Naive thymus-derived CD4-positive, alpha-beta T cell (primary cell): ENCODE measurements at regions of chr13 and their contacts with region 1.

Region 1: DNA sequence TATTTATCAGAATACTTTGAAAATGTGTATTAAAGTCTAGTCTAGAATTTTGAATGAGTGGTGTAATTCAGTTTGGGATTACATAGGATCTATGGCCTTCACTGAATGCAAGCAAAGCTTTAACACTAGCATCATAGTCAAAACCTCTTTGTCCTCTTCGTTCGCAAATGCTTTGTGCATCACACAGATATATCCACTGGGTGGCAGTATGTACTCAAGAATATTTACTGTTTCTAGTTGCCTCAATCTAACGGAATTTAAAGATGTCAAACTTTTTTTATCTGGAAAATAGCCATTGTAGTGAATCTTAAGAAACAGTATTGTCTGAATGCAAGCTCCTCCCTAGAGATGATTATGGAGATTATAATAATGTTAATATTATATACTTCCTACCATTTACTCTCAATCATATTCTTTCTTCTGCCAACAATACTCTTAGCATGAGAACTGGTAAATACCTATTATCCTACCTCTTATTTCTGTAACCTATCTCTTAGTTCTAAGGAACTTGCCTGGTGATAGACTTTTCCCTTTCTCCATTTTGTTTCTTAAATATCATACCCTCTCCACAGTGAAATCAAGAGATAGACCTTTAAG is 25.8 kb downstream of the LACC1 start:
- DNase-seq: peak in 7 of 9 donors; percentile 21 to 61 (median 48)
- ATAC-seq: peak; percentile 85
- H3K4me3 ChIP-seq: no peak overlapping the region
- H3K4me3 Mint-ChIP-seq: no peak overlapping the region
- H3K27ac ChIP-seq: no peak overlapping the region
- H3K27ac Mint-ChIP-seq: no peak overlapping the region
- H3K4me1 ChIP-seq: no peaks in the 10 kb centered on the region
- H3K4me1 Mint-ChIP-seq: peaks cover 0 to 6% (median 3%) of the 10 kb centered on the region in 7 donors
- H3K27me3 ChIP-seq: no peaks in the 10 kb centered on the region
- H3K27me3 Mint-ChIP-seq: peaks cover 13 to 35% (median 18%) of the 10 kb centered on the region in 5 donors

Region 2: GRCh38 chr13:42906258-42906657 is 999.3 kb before region 1 on chr13:
- CTCF ChIA-PET with region 1: no interaction called
- POLR2A ChIA-PET with region 1: no interaction called
- intact Hi-C with region 1: no loop called
- DNase-seq: no peak
- ATAC-seq: no peak
- H3K4me3 ChIP-seq: no peak overlapping the region
- H3K4me3 Mint-ChIP-seq: no peak overlapping the region
- H3K27ac ChIP-seq: no peak overlapping the region
- H3K27ac Mint-ChIP-seq: no peak overlapping the region
- H3K4me1 ChIP-seq: no peaks in the 10 kb centered on the region
- H3K4me1 Mint-ChIP-seq: peaks cover 0 to 7% (median 0%) of the 10 kb centered on the region in 7 donors
- H3K27me3 ChIP-seq: no peaks in the 10 kb centered on the region
- H3K27me3 Mint-ChIP-seq: no peaks in the 10 kb centered on the region

Region 3: GRCh38 chr13:43684963-43685725 is 220.4 kb before region 1 on chr13:
- CTCF ChIA-PET with region 1: no interaction called
- POLR2A ChIA-PET with region 1: no interaction called
- intact Hi-C with region 1: no loop called
- DNase-seq: no peak
- ATAC-seq: no peak
- H3K4me3 ChIP-seq: no peak overlapping the region
- H3K4me3 Mint-ChIP-seq: no peak overlapping the region
- H3K27ac ChIP-seq: no peak overlapping the region
- H3K27ac Mint-ChIP-seq: no peak overlapping the region
- H3K4me1 ChIP-seq: no peaks in the 10 kb centered on the region
- H3K4me1 Mint-ChIP-seq: no peaks in the 10 kb centered on the region
- H3K27me3 ChIP-seq: no peaks in the 10 kb centered on the region
- H3K27me3 Mint-ChIP-seq: peaks cover 0 to 14% (median 4%) of the 10 kb centered on the region in 5 donors

Region 4: DNA sequence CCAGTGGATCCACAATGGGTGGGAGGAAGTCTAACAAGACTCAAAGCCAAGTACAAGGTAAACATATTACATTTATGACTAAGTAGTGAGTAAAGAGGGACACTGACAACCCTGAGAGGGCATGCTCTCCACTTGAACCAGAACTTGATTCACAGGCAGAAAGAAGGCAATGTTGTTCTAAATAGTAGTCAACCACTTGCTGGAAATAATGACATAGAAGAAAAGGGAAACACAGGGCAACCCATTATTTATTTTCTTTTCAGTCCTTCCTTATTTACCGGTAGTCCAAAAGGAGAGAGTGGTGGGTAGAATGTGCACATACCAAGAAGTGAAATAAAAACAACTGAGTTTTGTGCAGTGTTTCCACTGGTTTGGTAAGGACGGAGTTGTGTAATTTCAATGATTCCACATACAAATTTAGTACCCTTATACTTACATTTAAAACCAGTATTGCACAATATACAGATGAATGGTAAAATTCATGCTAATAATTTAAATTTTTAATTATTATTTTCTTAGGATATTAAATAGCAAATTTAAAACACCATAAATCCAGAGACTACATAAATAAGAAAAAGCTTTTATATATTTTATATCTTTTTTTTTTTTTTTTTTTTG is 184.6 kb before region 1 on chr13:
- CTCF ChIA-PET with region 1: no interaction called
- POLR2A ChIA-PET with region 1: no interaction called
- intact Hi-C with region 1: no loop called
- DNase-seq: no peak
- ATAC-seq: no peak
- H3K4me3 ChIP-seq: no peak overlapping the region
- H3K4me3 Mint-ChIP-seq: no peak overlapping the region
- H3K27ac ChIP-seq: no peak overlapping the region
- H3K27ac Mint-ChIP-seq: no peak overlapping the region
- H3K4me1 ChIP-seq: no peaks in the 10 kb centered on the region
- H3K4me1 Mint-ChIP-seq: no peaks in the 10 kb centered on the region
- H3K27me3 ChIP-seq: no peaks in the 10 kb centered on the region
- H3K27me3 Mint-ChIP-seq: peaks cover 3 to 27% (median 16%) of the 10 kb centered on the region in 5 donors

Region 5: DNA sequence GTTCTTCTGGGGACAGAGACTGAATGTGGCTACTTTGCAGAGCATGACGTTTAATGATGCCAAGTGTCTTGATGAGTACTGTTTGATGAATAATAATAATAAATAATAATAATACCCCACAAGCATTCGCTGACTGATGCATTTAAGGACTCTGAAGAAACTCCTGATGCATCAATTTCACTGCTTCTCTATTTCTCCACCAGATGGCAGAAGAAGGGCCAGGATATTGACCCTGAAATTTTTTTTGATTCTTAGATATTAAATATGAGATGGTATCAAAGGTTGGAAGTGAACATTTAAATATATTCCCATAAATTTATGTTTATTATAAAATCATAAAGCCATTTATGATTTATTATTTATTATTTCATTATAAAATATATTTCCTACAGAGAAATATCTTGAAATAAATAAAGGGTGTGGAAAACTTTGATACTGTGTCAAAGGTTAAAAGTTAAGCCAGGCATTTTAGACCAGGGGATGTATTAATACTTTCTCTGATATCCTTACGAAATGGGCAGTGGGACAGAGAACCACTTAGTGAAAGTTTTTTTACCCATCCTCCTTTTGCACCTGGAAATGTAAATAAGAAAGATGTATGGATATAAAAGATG is 145.0 kb after region 1 on chr13:
- CTCF ChIA-PET with region 1: interaction called, 3 read pairs
- POLR2A ChIA-PET with region 1: no interaction called
- intact Hi-C with region 1: loop called (anchors 1 to 2 kb)
- DNase-seq: peak in 5 of 9 donors; percentile 25 to 50 (median 34)
- ATAC-seq: no peak
- H3K4me3 ChIP-seq: no peak overlapping the region
- H3K4me3 Mint-ChIP-seq: no peak overlapping the region
- H3K27ac ChIP-seq: no peak overlapping the region
- H3K27ac Mint-ChIP-seq: no peak overlapping the region
- H3K4me1 ChIP-seq: no peaks in the 10 kb centered on the region
- H3K4me1 Mint-ChIP-seq: peaks cover 0 to 4% (median 2%) of the 10 kb centered on the region in 7 donors
- H3K27me3 ChIP-seq: no peaks in the 10 kb centered on the region
- H3K27me3 Mint-ChIP-seq: peaks cover 32 to 53% (median 44%) of the 10 kb centered on the region in 5 donors

Region 6: GRCh38 chr13:44191504-44192171 is 286.1 kb after region 1 on chr13:
- CTCF ChIA-PET with region 1: no interaction called
- POLR2A ChIA-PET with region 1: no interaction called
- intact Hi-C with region 1: loop called in 1 of 2 experiments (anchors 1 kb)
- DNase-seq: peak in 7 of 9 donors; percentile 63 to 81 (median 72)
- ATAC-seq: peak; percentile 88
- H3K4me3 ChIP-seq: peak overlapping the region; percentile 0
- H3K4me3 Mint-ChIP-seq: peak overlapping the region; percentile 6 to 71 (median 59)
- H3K27ac ChIP-seq: no peak overlapping the region
- H3K27ac Mint-ChIP-seq: peak overlapping the region in 8 of 9 donors; percentile 75 to 97 (median 86)
- H3K4me1 ChIP-seq: peaks cover 0 to 6% of the 10 kb centered on the region in 2 donors
- H3K4me1 Mint-ChIP-seq: peaks cover 16 to 39% (median 35%) of the 10 kb centered on the region in 7 donors
- H3K27me3 ChIP-seq: no peaks in the 10 kb centered on the region
- H3K27me3 Mint-ChIP-seq: peaks cover 0 to 44% (median 0%) of the 10 kb centered on the region in 5 donors

Region 7: DNA sequence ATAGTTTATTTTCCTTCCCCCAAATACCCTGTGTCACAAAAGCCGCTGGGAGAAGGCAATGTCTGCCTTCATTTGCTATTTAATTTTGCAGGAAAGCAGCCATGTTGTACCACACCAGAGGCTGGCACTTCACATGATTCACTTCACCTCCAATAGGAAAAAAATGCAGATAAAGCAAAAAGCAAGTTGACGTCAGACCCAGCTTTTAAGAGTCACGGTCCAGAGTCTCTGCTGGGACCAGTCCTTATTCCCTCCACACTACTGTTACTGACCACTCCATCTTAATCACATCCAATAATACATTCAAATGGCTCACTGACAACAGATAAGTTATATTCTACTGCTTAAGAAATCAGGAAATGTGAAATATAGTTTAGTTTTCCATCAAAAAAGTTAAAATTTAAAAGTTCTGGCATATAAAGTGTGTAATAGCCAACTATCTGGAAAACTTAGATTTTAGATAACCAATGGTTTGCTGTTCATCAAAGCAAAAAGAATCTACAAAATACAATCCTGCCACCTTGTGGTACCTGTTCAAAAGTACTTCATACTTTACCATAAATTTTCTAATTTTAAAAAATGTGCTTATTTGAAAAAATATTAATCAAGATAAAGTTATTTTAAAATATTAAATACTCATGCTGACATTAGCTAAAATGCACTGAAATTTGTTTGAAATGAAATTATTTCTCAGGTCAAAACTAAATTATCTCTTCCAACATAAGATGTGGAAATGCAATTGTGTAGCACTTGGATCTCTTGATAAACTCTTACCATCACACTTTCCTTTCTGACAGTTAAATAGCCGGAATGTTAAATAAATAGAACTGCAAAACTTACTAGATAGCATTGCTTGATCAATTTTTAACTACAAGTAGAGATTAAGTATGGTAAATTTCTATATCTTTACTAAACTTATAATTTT is 565.4 kb after region 1 on chr13:
- CTCF ChIA-PET with region 1: interaction called, 11 read pairs
- POLR2A ChIA-PET with region 1: no interaction called
- intact Hi-C with region 1: loop called (anchors 1 kb)
- DNase-seq: peak in 5 of 9 donors; percentile 10 to 29 (median 21)
- ATAC-seq: no peak
- H3K4me3 ChIP-seq: no peak overlapping the region
- H3K4me3 Mint-ChIP-seq: no peak overlapping the region
- H3K27ac ChIP-seq: no peak overlapping the region
- H3K27ac Mint-ChIP-seq: no peak overlapping the region
- H3K4me1 ChIP-seq: no peaks in the 10 kb centered on the region
- H3K4me1 Mint-ChIP-seq: peaks cover 0 to 5% (median 0%) of the 10 kb centered on the region in 7 donors
- H3K27me3 ChIP-seq: no peaks in the 10 kb centered on the region
- H3K27me3 Mint-ChIP-seq: peaks cover 0 to 23% (median 0%) of the 10 kb centered on the region in 5 donors

Region 8: GRCh38 chr13:44969551-44970484 is 1064.3 kb after region 1 on chr13:
- CTCF ChIA-PET with region 1: interaction called, 3 read pairs
- POLR2A ChIA-PET with region 1: no interaction called
- intact Hi-C with region 1: loop called (anchors 1 to 5 kb)
- DNase-seq: peak in 5 of 9 donors; percentile 13 to 27 (median 18)
- ATAC-seq: peak; percentile 51
- H3K4me3 ChIP-seq: no peak overlapping the region
- H3K4me3 Mint-ChIP-seq: no peak overlapping the region
- H3K27ac ChIP-seq: no peak overlapping the region
- H3K27ac Mint-ChIP-seq: no peak overlapping the region
- H3K4me1 ChIP-seq: no peaks in the 10 kb centered on the region
- H3K4me1 Mint-ChIP-seq: no peaks in the 10 kb centered on the region
- H3K27me3 ChIP-seq: no peaks in the 10 kb centered on the region
- H3K27me3 Mint-ChIP-seq: no peaks in the 10 kb centered on the region